IMR-90 (cell line): ENCODE measurements at regions of chr1 and their contacts with region 1.

Region 1: DNA sequence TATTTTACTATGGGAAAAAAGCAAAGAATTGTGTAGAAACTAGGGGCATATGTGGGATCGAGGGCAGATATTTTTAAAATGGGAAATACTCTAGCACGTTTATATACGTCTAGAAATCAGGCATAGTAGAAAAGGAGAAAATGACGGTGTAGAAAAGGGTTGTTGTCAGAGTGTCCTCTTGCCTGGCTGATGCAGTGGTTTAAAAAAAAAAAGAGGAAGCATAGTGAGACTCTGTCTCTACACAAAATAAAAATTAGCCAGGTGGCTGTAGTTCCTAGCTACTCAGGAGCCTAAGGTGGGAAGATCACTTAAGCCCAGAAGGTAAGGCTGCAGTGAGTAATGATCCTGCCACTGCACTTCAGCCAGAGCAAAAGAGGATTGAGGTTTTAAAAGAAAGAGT is 64.7 kb upstream of the LRRC7 start:
- DNase-seq: no peak
- ATAC-seq: no peak
- H3K4me3 ChIP-seq: no peak overlapping the region
- H3K27ac ChIP-seq: no peak overlapping the region
- H3K4me1 ChIP-seq: no peaks in the 10 kb centered on the region
- H3K27me3 ChIP-seq: no peaks in the 10 kb centered on the region
- CTCF ChIP-seq: no peak
- POLR2A ChIP-seq: no peak
- RAD21 ChIP-seq: no peak

Region 2: GRCh38 chr1:69451196-69451595 is 51.8 kb before region 1 on chr1:
- CTCF ChIA-PET with region 1: no interaction called
- POLR2A ChIA-PET with region 1: no interaction called
- dilution Hi-C with region 1: no loop called
- in situ Hi-C with region 1: no loop called
- intact Hi-C with region 1: loop called (anchors 2 kb)
- DNase-seq: no peak
- ATAC-seq: no peak
- H3K4me3 ChIP-seq: no peak overlapping the region
- H3K27ac ChIP-seq: no peak overlapping the region
- H3K4me1 ChIP-seq: no peaks in the 10 kb centered on the region
- H3K27me3 ChIP-seq: no peaks in the 10 kb centered on the region
- CTCF ChIP-seq: no peak
- POLR2A ChIP-seq: no peak
- RAD21 ChIP-seq: no peak

Region 3: GRCh38 chr1:69485616-69486015 is 17.4 kb before region 1 on chr1:
- CTCF ChIA-PET with region 1: no interaction called
- POLR2A ChIA-PET with region 1: no interaction called
- dilution Hi-C with region 1: no loop called
- in situ Hi-C with region 1: no loop called
- intact Hi-C with region 1: no loop called
- DNase-seq: no peak
- ATAC-seq: no peak
- H3K4me3 ChIP-seq: no peak overlapping the region
- H3K27ac ChIP-seq: no peak overlapping the region
- H3K4me1 ChIP-seq: no peaks in the 10 kb centered on the region
- H3K27me3 ChIP-seq: no peaks in the 10 kb centered on the region
- CTCF ChIP-seq: no peak
- POLR2A ChIP-seq: no peak
- RAD21 ChIP-seq: no peak